BJ (cell line): ENCODE measurements at regions of chr19 and their contacts with region 1.

Region 1: GRCh38 chr19:14556662-14557188 is 15.1 kb downstream of the NDUFB7 start:
- DNase-seq: no peak
- H3K4me3 ChIP-seq: no peak overlapping the region
- H3K27me3 ChIP-seq: no peaks in the 10 kb centered on the region
- CTCF ChIP-seq: peak; percentile 99

Region 2: DNA sequence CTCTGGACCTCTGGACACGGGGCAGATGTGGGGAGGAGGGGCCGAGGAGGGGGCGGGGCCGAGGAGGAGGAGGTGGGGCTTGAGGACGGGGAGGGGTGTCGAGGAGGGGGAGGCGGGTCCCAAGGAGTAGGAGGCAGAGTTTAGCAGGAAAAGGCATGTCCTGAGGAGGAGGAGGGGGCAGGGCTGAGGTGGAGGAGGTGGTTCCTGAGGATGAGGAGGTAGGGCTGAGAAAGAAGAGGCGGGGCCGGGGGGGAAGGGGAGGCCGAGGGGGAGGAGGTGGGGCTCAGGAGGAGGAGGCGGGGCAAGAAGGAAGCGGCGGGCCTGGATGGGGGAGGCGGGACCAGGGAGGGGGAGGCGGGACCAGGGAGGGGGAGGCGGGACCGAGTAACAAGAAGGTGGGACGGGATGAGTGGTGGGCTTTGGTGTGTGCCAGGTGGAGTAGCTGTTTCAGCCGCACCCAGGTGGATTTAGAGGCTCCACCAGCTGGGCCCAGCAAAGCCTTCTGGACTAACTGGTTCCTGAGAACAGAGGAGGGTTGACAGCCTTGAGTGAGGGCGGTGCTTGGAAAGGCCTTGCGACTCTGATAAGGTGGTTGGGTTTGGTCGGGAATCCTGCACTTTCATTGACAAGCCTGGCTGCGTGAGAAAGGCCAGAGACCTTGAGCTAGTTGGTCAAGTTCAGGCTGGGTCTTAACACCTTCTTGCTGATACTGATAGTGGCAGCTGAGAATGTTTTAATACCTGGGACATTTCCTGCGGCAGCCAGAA is 19.6 kb before region 1 on chr19:
- CTCF ChIA-PET with region 1: interaction called, 27 read pairs
- POLR2A ChIA-PET with region 1: no interaction called
- DNase-seq: no peak
- H3K4me3 ChIP-seq: no peak overlapping the region
- H3K27me3 ChIP-seq: no peaks in the 10 kb centered on the region
- CTCF ChIP-seq: no peak

Region 3: DNA sequence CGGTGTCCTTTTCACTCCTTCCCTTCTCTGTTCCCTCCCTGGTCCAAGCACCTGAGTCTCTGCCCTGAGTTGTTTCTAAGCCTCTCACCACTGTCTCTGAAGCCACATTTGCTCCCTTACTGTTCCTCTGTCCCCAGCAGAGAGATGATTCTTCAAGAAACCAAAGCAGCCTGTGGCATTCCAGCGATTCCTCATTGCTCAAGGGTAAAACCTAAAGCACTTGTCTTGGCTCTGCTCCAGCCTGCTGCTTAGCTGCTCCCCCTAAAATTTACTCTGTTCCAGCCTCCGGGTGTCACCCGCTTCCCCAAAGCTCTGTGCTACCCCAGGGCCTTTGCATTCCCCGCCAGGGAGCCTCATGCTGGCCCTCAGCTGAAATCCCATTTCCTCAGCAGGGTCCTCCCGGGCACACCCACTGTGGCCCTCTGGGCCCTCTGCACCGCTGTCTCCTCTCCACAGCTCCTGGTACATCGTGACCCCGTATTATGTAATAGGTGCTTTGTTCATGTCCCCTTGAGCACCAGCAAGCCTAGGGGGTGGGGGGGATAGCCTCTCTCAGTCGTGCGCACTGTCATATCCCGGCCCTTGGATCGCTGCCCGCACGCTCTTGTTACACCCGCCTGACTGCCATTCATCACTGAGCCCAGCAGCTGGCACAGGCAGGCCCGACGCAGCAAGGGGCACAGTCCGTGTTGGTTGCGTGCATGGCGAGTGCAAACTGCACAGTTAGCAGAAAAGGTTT is 11.6 kb before region 1 on chr19:
- CTCF ChIA-PET with region 1: interaction called, 26 read pairs
- POLR2A ChIA-PET with region 1: no interaction called
- DNase-seq: no peak
- H3K4me3 ChIP-seq: no peak overlapping the region
- H3K27me3 ChIP-seq: no peaks in the 10 kb centered on the region
- CTCF ChIP-seq: no peak

Region 4: DNA sequence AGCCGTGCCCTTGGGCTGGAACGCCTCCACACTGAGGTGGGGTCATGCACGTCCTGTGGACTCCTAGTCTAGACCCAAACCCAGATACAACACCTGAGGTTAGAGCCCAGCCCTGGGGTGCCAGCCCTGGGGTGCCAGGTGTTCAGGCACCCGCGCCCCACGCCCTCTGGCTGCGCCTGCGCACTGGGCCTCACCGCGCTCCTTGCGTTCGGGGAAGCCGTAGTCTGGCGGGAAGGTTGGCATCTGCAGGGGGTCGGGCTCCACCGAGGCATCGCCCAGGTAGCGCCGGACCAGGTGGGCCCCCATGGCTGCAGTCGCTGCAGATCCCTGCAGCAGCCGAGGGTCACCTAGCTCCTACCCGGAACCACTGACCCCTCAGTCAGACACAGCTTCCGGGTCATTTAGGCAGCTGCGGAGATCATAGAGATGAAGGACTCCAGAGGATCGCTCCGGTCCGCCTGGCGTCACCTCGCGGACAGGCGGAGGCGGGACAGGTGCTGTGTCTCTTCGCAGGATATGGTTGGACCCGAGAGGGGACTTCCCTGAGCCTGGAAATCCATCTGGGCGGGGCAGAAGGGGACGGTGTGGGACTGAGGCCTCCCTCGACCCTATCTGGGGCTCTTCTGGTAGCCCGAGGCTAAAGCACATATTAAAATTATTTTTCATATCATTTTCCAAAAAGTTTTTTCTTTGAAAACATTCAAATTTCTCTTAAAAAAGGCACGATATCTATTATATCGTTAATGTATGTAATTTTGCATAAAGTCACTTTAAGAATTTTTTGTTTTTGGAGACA is 15.2 kb after region 1 on chr19 and contains the start of gene NDUFB7:
- CTCF ChIA-PET with region 1: interaction called, 62 read pairs
- POLR2A ChIA-PET with region 1: no interaction called
- DNase-seq: peak; percentile 58
- H3K4me3 ChIP-seq: peak within 1 kb of the TSS; percentile 95
- H3K27me3 ChIP-seq: no peaks in the 10 kb centered on the region
- CTCF ChIP-seq: peak; percentile 87
- polyA plus RNA-seq, gene NDUFB7: 135 and 147 TPM in 2 replicates